CD8-positive, alpha-beta T cell (primary cell): ENCODE measurements at regions of chr12 and their contacts with region 1.

Region 1: GRCh38 chr12:106736051-106736957 is 38.2 kb upstream of the RIC8B start:
- DNase-seq: peak in 3 of 9 experiments; percentile 13 to 63 (median 51)
- ATAC-seq: peak; percentile 61
- H3K4me3 ChIP-seq: no peak overlapping the region
- H3K4me3 Mint-ChIP-seq: no peak overlapping the region
- H3K27ac ChIP-seq: no peak overlapping the region
- H3K27ac Mint-ChIP-seq: no peak overlapping the region
- H3K4me1 ChIP-seq: no peaks in the 10 kb centered on the region
- H3K4me1 Mint-ChIP-seq: peaks cover 7% of the 10 kb centered on the region
- H3K27me3 ChIP-seq: no peaks in the 10 kb centered on the region
- H3K27me3 Mint-ChIP-seq: no peaks in the 10 kb centered on the region
- CTCF ChIP-seq: no peak

Region 2: DNA sequence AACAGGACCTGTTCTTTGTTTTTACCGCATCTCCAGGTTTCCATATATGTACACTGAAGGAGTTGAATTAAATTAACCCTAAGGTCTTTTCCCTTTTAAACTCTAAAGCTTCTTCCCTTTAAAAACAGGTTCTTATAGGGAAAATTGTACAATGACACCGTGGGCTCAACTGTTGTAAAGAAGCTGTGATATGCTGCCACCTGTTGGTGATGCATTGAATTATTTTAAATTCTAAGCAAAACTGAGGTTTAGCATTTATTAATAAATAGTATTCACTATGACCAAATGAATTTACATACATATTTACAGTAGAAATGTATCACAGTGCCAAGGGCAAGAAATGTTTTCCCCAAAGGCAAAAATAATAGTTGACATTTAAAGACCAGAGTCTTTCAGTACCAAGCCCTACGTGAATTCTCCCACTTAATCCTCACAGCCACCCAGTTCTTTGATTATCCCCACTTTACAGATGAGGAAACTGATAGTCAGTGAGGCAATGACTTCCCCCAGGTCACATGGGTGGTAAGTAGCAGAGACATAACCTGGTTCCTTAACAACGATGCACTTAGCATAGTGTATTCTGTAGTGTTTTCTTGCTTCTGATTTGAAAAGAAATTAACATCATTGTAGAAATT is 183.7 kb after region 1 on chr12:
- CTCF ChIA-PET with region 1: interaction called, 13 read pairs
- POLR2A ChIA-PET with region 1: no interaction called
- intact Hi-C with region 1: loop called (anchors 1 to 2 kb)
- DNase-seq: peak in 3 of 9 experiments; percentile 32 to 67 (median 58)
- ATAC-seq: no peak
- H3K4me3 ChIP-seq: no peak overlapping the region
- H3K4me3 Mint-ChIP-seq: no peak overlapping the region
- H3K27ac ChIP-seq: no peak overlapping the region
- H3K27ac Mint-ChIP-seq: no peak overlapping the region
- H3K4me1 ChIP-seq: peaks cover 7% of the 10 kb centered on the region
- H3K4me1 Mint-ChIP-seq: peaks cover 9% of the 10 kb centered on the region
- H3K27me3 ChIP-seq: no peaks in the 10 kb centered on the region
- H3K27me3 Mint-ChIP-seq: peaks cover 3% of the 10 kb centered on the region
- CTCF ChIP-seq: peak; percentile 95